SK-N-SH (cell line): ENCODE measurements at regions of chr20 and their contacts with region 1.

Region 1: GRCh38 chr20:43749734-43750294 is 23.0 kb upstream of the GTSF1L start:
- DNase-seq: peak; percentile 93
- H3K4me3 ChIP-seq: no peak overlapping the region; a peak in 1 of 4 replicates
- H3K27ac ChIP-seq: no peak overlapping the region
- H3K4me1 ChIP-seq: peaks cover 4 to 6% of the 10 kb centered on the region in 2 experiments; a peak in 2 of 4 replicates
- H3K27me3 ChIP-seq: no peaks in the 10 kb centered on the region
- CTCF ChIP-seq: peak; percentile 98
- EP300 ChIP-seq: no peak
- RAD21 ChIP-seq: peak; percentile 95

Region 2: DNA sequence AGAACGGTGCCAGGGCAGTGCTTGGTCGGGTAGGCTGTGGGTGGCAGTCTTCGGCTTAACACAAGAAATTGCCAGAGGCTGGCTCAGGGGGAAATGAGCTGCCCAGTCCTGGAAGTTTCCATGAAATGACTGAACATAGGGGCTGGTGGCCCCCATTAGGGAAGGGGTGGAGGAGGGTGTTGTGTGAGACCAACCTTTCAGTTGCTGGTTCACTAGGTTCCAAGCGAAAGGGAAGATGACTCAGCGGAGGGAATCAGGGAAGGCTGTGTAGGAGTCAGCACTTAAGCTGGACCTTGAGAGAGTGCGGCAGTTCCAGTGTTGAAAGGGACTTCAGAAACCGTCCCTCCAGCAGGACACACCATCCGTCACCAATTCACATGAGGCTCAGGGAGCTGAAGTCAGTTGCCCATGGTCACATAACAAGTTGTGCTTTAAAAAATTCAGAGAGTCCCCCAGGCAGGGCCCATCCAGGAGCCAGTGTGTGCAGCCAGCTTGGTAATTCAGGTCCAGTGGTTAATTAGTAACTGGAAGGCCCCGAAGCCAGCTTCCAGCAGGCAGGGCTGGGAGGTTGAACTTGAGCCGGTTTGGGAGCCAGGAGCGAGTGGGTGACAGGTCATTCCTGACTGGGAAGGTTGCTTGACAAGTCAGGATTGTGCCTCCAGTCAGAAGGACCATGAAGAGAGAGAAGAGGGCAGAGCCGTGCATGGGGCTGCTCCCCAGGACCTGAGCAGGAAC is 191.2 kb before region 1 on chr20 and contains the start of gene SGK2:
- CTCF ChIA-PET with region 1: no interaction called
- POLR2A ChIA-PET with region 1: no interaction called
- DNase-seq: no peak
- H3K4me3 ChIP-seq: no peak within 1 kb of the TSS
- H3K27ac ChIP-seq: no peak within 1 kb of the TSS
- H3K4me1 ChIP-seq: peaks cover 4 to 7% of the 10 kb centered on the region in 2 experiments; a peak in 1 of 4 replicates
- H3K27me3 ChIP-seq: no peaks in the 10 kb centered on the region
- CTCF ChIP-seq: no peak
- EP300 ChIP-seq: no peak
- RAD21 ChIP-seq: no peak
- polyA plus RNA-seq, gene SGK2: 0.21 and 0.57 TPM in 2 replicates

Region 3: DNA sequence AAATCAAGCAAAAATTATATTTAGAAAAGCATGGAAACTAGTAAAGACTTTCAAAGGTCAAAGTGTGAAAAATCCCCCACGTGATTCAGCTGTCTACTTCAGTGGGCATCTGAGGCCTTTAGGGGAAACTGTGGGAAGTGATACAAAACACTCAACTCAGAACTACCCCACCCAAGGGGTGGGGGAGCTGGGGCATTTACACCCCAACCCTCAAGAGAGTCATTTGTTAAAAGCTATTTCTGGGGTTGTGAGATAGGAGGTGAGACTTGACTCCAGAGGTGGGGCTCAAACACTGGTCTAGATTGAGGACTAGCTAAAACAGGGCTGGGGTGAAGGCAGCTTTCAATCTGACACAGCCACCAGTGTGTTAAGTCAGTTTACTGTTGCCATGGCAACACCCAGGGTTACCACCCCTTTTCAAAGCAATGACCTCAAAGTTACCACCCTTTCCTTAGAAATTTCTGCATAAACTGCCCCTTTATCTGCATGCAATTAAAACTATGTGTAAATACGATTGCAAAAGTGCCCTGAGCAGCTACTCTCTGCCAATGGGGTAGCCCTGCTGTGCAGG is 13.1 kb before region 1 on chr20:
- CTCF ChIA-PET with region 1: interaction called, 12 read pairs
- POLR2A ChIA-PET with region 1: no interaction called
- DNase-seq: no peak
- H3K4me3 ChIP-seq: no peak overlapping the region
- H3K27ac ChIP-seq: no peak overlapping the region
- H3K4me1 ChIP-seq: no peaks in the 10 kb centered on the region
- H3K27me3 ChIP-seq: no peaks in the 10 kb centered on the region
- CTCF ChIP-seq: no peak
- EP300 ChIP-seq: no peak
- RAD21 ChIP-seq: no peak

Region 4: GRCh38 chr20:43840382-43841070 is 90.7 kb after region 1 on chr20:
- CTCF ChIA-PET with region 1: interaction called, 29 read pairs
- POLR2A ChIA-PET with region 1: no interaction called
- DNase-seq: peak; percentile 71
- H3K4me3 ChIP-seq: no peak overlapping the region
- H3K27ac ChIP-seq: no peak overlapping the region
- H3K4me1 ChIP-seq: peaks cover 8 to 14% of the 10 kb centered on the region in 2 experiments; a peak in 2 of 4 replicates
- H3K27me3 ChIP-seq: no peaks in the 10 kb centered on the region
- CTCF ChIP-seq: peak; percentile 47
- EP300 ChIP-seq: no peak
- RAD21 ChIP-seq: peak; percentile 44

Region 5: DNA sequence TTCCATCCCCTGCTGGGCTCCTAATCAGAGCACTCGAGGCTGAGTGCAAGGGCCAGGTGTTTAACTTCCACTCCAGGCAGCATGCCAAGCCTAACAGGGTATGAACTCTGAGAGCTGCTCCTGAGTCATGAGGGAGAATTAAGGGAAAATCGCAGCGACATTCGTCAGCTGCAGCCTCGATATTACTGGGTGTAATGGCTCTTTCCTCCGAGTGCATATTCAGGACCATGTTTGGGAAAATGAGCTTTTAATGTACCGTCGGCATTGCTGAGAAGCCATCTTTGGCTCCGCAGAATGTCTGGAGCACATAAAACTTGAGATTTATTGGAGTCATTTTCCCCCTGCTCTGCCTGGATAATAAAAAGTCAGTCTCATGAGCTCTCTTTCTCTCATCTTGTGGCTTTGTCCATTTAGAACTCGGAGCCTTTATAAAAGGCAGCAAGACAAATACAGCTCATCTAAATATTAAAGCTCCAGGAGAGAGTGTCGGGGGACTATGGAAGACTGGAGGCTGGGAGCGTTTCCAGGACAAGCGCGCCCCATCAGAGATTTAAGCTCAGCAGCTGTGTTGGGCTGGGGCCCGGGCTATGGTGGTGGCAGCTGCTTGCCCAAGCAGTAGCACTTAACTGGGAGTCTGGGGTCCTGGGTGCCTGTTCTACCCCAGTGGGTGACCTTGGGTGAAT is 268.6 kb after region 1 on chr20:
- CTCF ChIA-PET with region 1: interaction called, 12 read pairs
- POLR2A ChIA-PET with region 1: no interaction called
- DNase-seq: peak; percentile 61
- H3K4me3 ChIP-seq: peak overlapping the region; percentile 16 to 24; a peak in 3 of 4 replicates
- H3K27ac ChIP-seq: peak overlapping the region; percentile 72 to 96
- H3K4me1 ChIP-seq: peaks cover 37 to 76% of the 10 kb centered on the region in 2 experiments
- H3K27me3 ChIP-seq: no peaks in the 10 kb centered on the region
- CTCF ChIP-seq: no peak
- EP300 ChIP-seq: peak; percentile 58 to 88; a peak in 3 of 4 replicates
- RAD21 ChIP-seq: peak; percentile 32

Region 6: GRCh38 chr20:44080646-44081267 is 330.9 kb after region 1 on chr20:
- CTCF ChIA-PET with region 1: interaction called, 134 read pairs
- POLR2A ChIA-PET with region 1: no interaction called
- DNase-seq: peak; percentile 79
- H3K4me3 ChIP-seq: no peak overlapping the region; a peak in 1 of 4 replicates
- H3K27ac ChIP-seq: peak overlapping the region in 1 of 2 experiments; percentile 30; a peak in 1 of 4 replicates
- H3K4me1 ChIP-seq: peaks cover 7 to 17% of the 10 kb centered on the region in 2 experiments; a peak in 3 of 4 replicates
- H3K27me3 ChIP-seq: no peaks in the 10 kb centered on the region
- CTCF ChIP-seq: peak; percentile 98
- EP300 ChIP-seq: no peak
- RAD21 ChIP-seq: peak; percentile 99